IMR-90 (cell line): ENCODE measurements at regions of chr17 and their contacts with region 1.

Region 1: DNA sequence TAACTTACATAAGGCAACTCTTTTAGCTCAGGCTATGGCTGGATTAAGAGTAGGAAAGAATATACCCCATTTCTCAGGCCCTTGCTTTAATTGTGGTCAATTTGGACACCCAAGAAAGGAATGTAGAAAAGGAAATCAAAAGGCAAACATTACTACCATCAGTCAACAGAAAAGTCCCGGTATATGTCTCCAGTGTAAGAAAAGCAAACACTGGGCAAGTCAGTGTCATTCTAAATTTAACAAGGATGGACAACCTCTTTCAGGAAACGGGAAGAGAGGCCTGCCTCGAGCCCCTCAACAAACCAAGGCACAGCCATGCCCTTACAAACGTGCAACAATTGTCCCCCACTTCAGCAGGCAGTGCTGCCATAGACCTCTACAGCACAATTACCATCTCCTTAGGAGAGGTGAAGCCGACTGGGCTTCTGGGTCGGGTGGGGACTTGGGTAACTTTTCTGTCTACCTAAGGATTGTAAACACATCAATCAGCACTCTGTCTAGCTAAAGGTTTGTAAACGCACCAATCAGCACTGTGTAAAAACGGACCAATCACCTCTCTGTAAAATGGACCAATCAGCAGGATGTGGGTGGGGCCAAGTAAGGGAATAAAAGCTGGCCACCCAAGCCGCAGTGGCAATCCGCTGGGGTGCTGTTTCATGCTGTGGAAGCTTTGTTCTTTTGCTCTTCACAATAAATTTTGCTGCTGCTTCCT is 12.4 kb downstream of the MRPL58 start:
- DNase-seq: no peak
- ATAC-seq: no peak
- H3K4me3 ChIP-seq: no peak overlapping the region
- H3K27ac ChIP-seq: no peak overlapping the region
- H3K4me1 ChIP-seq: no peaks in the 10 kb centered on the region
- H3K27me3 ChIP-seq: no peaks in the 10 kb centered on the region
- CTCF ChIP-seq: no peak
- POLR2A ChIP-seq: no peak
- RAD21 ChIP-seq: no peak

Region 2: GRCh38 chr17:75194879-75195278 is 170.0 kb after region 1 on chr17:
- CTCF ChIA-PET with region 1: no interaction called
- POLR2A ChIA-PET with region 1: interaction called, 10 read pairs
- dilution Hi-C with region 1: no loop called
- in situ Hi-C with region 1: no loop called
- intact Hi-C with region 1: no loop called
- DNase-seq: no peak
- ATAC-seq: no peak
- H3K4me3 ChIP-seq: no peak overlapping the region
- H3K27ac ChIP-seq: no peak overlapping the region
- H3K4me1 ChIP-seq: no peaks in the 10 kb centered on the region
- H3K27me3 ChIP-seq: no peaks in the 10 kb centered on the region
- CTCF ChIP-seq: no peak
- POLR2A ChIP-seq: no peak
- RAD21 ChIP-seq: no peak

Region 3: DNA sequence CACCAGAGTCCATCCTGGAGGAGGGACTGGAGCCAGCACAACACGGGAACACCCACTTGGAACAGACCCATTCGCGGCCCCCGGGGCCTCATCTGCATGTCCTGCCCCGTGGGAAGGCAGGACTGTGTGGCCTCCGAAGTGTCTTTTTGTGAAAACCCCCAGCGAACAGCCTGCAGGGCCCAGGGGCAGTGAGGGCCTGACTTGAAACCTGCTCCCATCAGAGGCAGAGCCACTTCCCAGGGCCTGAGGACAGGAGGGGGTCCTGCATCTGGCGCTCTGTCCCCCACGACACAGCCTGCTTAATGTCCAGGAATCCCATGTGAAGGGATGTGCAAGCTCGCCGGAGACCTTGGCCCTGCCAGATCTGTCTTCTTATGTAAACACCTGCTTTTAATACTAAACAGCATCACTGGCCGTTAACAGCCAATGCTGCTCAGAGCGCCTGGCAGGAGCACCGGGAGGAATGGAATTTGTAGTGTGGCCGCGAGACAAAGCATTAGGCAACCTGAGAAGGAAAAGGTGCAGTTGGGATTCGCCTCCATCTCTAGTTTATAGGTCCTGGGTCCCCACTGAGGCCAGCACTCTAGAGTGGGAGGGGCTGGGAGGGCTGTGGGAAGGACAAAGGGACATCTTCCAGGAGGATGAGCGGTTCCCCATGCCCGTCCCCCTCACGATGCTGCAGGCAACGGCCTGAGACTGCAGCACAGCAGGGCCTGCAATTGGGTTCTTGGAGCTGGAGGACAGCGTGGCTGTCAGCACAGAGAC is 1011.8 kb after region 1 on chr17:
- CTCF ChIA-PET with region 1: no interaction called
- POLR2A ChIA-PET with region 1: no interaction called
- dilution Hi-C with region 1: no loop called
- in situ Hi-C with region 1: no loop called
- intact Hi-C with region 1: no loop called
- DNase-seq: peak; percentile 17
- ATAC-seq: peak; percentile 61
- H3K4me3 ChIP-seq: no peak overlapping the region
- H3K27ac ChIP-seq: no peak overlapping the region
- H3K4me1 ChIP-seq: no peaks in the 10 kb centered on the region
- H3K27me3 ChIP-seq: no peaks in the 10 kb centered on the region
- CTCF ChIP-seq: no peak
- POLR2A ChIP-seq: no peak
- RAD21 ChIP-seq: no peak